ENCODE measurements at regions of chr7 and their contacts with region 1.

Region 1: GRCh38 chr7:17301471-17302456 is 3.3 kb downstream of the AHR start:
- DNase-seq: peak in 2 of 10 donors; percentile 27 to 44

Region 2: GRCh38 chr7:17144322-17144721 is 157.4 kb before region 1 on chr7:
- intact Hi-C with region 1: loop called (anchors 10 kb)
- DNase-seq: no peak

Region 3: DNA sequence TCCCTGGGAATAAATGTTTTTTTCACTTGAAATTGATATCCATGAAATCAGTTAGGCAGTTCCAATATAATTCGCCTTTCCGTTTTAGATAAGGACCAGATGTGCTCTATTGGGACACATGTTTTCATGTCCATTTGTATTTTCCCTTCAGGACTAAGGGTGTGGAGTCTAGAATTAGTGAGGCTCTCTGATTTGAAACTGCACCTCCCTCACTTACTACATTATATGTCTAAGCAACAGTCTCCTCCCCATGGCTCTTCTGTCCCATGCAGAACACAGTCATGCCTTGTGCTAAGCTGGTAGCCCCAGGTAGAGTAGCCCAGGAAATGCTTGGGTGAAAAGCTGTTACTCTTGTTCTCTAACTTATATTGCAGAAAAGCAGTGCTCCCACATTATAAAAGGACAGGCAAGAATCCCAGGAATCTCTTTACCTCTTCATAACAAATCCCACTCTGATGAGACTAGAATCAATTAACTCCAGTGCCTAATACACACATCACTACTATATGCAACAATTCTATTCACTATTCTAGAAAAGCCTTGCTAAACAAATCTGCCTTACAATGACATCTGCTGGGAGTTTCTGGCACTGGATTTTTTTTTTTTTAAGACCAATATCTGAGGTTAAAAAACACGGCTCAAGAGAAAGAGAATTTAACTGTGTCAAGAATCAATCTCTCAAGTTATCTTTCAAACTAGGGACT is 344.6 kb after region 1 on chr7:
- intact Hi-C with region 1: loop called (anchors 5 kb)
- DNase-seq: no peak